Endothelial cell of umbilical vein (primary cell): ENCODE measurements at regions of chr16 and their contacts with region 1.

Region 1: DNA sequence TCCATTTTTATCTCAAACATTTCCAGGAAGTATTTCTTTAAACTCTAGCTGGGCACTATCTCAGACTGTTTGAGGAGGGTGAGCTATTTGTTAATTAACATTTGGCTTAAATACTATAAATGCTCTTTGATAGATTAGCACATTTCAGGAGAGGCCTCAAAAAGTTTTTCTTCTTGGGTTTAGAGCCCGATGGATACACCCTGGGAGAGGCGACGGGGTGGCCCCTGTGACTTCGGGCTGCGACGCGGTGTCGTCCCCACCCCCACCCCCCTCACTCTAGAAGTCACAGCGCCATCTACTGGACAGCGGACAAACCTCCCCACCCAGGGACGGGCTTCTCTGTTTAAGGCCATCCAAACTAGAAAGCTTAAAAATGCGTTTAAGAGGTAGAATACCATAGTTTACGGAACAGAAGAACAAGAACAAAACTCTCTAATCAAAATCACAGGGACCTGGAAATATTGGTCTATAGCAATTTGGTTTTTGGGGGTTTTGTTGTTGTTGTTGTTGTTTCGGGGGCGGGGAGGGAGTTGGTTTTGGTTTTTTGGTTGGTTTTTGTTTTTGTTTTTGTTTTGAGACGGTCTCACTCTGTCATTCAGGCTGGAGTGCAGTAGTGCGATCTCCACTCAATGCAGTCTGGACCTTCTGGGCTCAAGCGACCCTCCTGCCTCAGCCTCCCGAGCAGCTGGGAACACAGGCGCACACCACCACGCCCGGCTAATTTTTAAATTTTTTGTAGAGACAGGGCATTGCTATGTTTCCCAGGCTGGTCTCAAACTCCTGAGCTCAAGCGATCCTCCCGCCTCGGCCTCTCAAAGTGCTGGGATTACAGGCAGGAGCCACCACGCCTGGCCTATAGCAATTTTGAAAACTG is 254.4 kb downstream of the C16orf95 start:
- DNase-seq: peak; percentile 88
- H3K4me3 ChIP-seq: peak overlapping the region; percentile 24 to 93 (median 43)
- H3K27ac ChIP-seq: peak overlapping the region; percentile 92
- H3K4me1 ChIP-seq: peaks cover 49% of the 10 kb centered on the region
- H3K27me3 ChIP-seq: no peaks in the 10 kb centered on the region
- CTCF ChIP-seq: peak; percentile 80 to 83
- POLR2A ChIP-seq: no peak

Region 2: DNA sequence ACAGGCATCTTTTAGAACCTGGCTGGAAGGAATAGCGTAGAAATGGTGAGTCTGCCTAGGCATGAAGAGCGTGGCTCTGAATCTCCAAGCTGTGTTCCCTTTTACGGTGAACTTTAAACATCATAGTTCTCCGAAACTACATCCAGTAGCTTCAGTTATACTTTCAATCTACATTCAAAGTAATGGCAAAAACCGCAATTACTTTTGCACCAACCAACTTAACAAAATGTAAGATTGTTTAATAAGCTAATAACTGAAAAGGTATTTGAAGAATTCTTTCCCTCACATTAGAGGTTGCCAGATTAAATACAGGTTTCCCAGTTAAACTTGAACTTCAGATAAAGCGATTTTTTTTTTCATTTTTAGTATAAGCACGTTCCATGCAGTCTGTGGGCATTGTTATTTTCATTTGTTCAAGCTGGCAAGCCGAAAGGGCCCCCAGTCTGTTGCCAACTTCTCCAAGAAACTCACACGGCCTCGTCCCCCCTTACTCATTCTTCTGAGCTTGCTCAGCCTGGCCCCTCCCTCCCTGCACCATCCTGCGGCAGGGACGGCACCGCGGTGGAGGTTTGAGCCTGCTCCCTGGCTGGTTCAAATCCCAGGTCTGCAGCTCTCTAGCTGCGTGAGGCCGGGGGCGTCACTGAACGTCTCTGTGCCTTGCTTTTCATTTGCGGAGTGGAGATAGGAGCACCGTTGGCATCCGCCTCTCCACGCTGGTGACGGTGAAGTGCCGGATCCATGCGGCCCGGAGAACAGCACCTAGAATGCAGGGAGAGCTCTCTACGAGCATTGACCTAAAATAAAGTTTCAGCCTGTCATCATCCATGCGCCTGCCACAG is 504.2 kb before region 1 on chr16:
- CTCF ChIA-PET with region 1: interaction called, 283 read pairs
- POLR2A ChIA-PET with region 1: no interaction called
- dilution Hi-C with region 1: no loop called
- intact Hi-C with region 1: no loop called
- DNase-seq: no peak
- H3K4me3 ChIP-seq: no peak overlapping the region
- H3K27ac ChIP-seq: no peak overlapping the region
- H3K4me1 ChIP-seq: peaks cover 17% of the 10 kb centered on the region
- H3K27me3 ChIP-seq: peaks cover 3 to 5% of the 10 kb centered on the region in 2 experiments
- CTCF ChIP-seq: no peak
- POLR2A ChIP-seq: no peak

Region 3: DNA sequence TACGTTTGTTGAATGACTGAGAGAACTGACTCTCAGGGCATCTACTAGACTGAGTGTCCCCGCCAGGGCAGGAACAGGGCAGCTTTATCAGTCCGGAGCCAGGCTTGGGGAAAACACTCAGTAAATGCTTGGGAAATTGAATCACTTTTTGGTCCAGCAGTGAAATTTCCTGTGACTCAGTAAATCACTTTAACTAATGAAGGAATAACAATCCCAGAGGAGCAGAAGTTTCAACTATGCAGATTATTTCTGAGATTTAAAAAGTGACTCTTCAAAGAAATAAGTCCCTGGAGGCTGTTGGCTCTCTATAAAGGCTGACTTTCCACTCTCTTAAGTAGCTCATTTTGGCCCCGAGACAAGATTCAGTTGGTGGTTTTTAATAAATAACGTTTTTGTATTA is 382.6 kb before region 1 on chr16:
- CTCF ChIA-PET with region 1: interaction called, 6 read pairs
- POLR2A ChIA-PET with region 1: no interaction called
- dilution Hi-C with region 1: no loop called
- intact Hi-C with region 1: loop called (anchors 5 kb)
- DNase-seq: peak; percentile 96
- H3K4me3 ChIP-seq: peak overlapping the region in 1 of 3 experiments; percentile 37
- H3K27ac ChIP-seq: peak overlapping the region; percentile 99
- H3K4me1 ChIP-seq: peaks cover 42% of the 10 kb centered on the region
- H3K27me3 ChIP-seq: no peaks in the 10 kb centered on the region
- CTCF ChIP-seq: no peak
- POLR2A ChIP-seq: peak; percentile 51

Region 4: DNA sequence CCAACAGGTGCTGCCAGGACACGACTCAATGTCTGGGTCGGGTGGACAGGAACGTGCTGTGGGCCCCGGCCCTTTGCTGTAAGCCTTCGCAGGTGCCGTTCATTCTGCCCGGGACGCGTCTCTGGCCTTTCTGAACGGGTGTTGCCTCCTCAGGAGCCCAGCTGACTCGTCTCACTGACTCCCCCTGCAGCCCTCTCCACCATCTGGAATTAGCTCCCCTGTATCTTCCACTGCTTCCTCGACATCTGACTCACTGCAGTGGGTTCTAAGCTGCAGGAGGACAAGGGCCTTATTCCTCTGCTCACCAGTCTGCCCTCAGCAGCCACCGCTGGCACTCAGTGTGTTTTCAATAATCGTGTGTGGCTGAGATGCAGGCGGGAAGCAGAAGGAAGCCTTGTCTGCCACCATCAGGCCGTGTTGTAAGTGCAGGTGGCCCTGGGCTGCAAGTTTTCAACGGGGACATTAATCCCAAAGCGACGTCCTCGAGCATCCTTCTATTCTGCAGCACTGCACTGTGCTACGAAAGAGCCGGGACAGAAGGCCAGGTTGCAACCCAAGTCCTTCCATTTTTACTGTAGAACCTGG is 228.3 kb before region 1 on chr16:
- CTCF ChIA-PET with region 1: interaction called, 7 read pairs
- POLR2A ChIA-PET with region 1: no interaction called
- dilution Hi-C with region 1: no loop called
- intact Hi-C with region 1: loop called (anchors 2 kb)
- DNase-seq: peak; percentile 41
- H3K4me3 ChIP-seq: no peak overlapping the region
- H3K27ac ChIP-seq: no peak overlapping the region
- H3K4me1 ChIP-seq: peaks cover 7% of the 10 kb centered on the region
- H3K27me3 ChIP-seq: no peaks in the 10 kb centered on the region
- CTCF ChIP-seq: peak in 1 of 2 donors; percentile 29
- POLR2A ChIP-seq: no peak

Region 5: DNA sequence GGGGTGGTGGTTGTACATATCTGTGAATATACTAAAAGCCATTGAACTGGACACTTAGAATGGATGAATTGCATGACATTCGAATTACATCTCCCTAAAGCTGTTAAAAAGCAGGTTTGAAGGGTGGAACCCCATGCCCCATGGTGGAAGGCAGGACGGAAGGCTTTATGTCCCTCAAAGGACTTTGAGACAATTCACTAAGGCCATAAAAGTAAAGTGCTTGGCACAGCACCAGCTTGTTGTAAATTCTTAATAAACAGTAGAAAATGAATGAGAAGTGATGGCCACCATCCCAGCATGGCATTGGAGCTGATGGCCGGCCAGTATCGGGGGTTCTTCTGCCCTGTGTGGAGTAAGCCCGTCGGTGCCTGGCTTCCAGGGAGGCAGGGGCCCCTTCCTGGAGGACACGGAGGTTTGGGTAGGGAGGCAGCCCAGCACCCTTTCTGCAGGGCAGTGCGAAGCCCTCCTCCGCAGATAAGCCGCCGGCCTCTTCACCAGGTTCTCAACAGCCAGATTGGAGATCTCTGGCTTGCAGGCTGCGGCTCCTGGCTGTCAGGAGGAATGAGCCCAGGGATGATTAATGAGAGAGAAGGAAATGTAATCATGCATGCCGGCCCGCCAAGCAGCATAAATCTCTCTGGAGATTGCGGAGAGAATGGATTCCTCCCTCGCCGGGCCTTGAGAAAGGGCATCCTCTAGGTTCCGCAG is 137.6 kb before region 1 on chr16:
- CTCF ChIA-PET with region 1: interaction called, 17 read pairs
- POLR2A ChIA-PET with region 1: no interaction called
- dilution Hi-C with region 1: no loop called
- intact Hi-C with region 1: no loop called
- DNase-seq: peak; percentile 86
- H3K4me3 ChIP-seq: no peak overlapping the region
- H3K27ac ChIP-seq: peak overlapping the region; percentile 33
- H3K4me1 ChIP-seq: peaks cover 46% of the 10 kb centered on the region
- H3K27me3 ChIP-seq: no peaks in the 10 kb centered on the region
- CTCF ChIP-seq: no peak
- POLR2A ChIP-seq: no peak

Region 6: DNA sequence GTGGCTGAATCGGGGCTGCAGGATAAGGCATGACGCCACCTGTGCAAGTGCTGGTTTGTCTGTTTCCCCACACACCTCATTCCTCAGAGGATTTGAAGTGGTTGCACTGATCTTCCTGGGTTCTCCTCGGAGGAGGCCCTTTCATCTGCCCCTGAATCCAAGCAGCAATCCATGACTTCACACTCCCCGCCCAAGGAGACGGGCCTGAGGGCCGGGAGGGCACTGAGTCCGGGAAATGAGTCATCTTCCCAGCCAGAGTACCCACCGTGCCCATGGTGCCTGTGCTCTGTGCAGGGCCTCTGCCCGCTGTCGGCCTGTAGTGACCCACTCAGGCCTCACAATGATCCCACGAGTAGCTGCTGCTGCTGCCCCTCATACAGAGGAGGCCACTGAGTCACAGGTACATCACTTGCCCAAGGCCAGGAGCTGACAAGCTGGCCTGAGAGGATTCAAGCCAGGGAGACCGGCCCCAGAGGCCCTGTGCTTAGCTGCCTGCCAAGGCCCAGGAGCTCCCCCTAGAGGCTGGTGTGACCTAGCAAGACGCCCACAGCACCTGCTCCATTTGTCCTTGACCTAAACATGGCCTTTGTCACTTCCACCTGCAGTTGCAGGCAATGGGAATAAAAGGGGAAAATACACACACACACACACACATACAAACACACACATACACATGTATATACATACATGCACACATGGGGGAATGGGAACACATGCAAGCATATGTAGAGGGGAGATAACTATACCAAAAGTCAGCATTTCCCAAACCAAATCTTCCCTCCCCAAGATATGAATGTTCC is 14.3 kb after region 1 on chr16:
- CTCF ChIA-PET with region 1: interaction called, 52 read pairs
- POLR2A ChIA-PET with region 1: no interaction called
- dilution Hi-C with region 1: no loop called
- intact Hi-C with region 1: loop called (anchors 1 kb)
- DNase-seq: peak; percentile 87
- H3K4me3 ChIP-seq: no peak overlapping the region
- H3K27ac ChIP-seq: peak overlapping the region; percentile 52
- H3K4me1 ChIP-seq: peaks cover 11% of the 10 kb centered on the region
- H3K27me3 ChIP-seq: no peaks in the 10 kb centered on the region
- CTCF ChIP-seq: peak; percentile 88 to 91
- POLR2A ChIP-seq: no peak

Region 7: DNA sequence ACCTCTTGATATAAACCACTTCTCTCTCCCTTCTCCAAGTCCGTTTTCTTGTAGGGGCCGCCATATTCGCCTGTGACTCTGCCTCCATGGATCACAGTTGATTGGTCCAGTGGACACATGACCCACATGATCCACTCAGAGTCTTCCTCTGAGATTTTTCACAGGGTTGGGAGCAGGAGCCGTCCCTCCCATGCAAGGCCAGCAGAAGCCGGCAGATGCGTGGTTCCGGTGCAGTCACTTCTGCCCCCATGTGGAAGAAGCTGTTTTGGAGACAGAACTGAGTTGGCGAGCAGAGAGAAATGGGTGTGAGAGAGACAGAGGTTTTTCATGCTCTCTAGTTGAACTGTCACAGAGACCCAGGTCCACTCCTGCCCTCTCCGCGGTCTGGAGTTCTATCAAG is 171.1 kb after region 1 on chr16:
- CTCF ChIA-PET with region 1: interaction called, 16 read pairs
- POLR2A ChIA-PET with region 1: no interaction called
- dilution Hi-C with region 1: no loop called
- intact Hi-C with region 1: no loop called
- DNase-seq: peak; percentile 26
- H3K4me3 ChIP-seq: no peak overlapping the region
- H3K27ac ChIP-seq: no peak overlapping the region
- H3K4me1 ChIP-seq: no peaks in the 10 kb centered on the region
- H3K27me3 ChIP-seq: peaks cover 4 to 6% of the 10 kb centered on the region in 2 experiments
- CTCF ChIP-seq: peak in 1 of 2 donors; percentile 32
- POLR2A ChIP-seq: no peak